ENCODE measurements at regions of chr18 and their contacts with region 1.

Region 1: GRCh38 chr18:63823518-63824219 is 48.5 kb downstream of the SERPINB7 start:
- DNase-seq: peak; percentile 19 to 38
- H3K4me3 ChIP-seq: no peak overlapping the region
- H3K27ac ChIP-seq: no peak overlapping the region
- H3K4me1 ChIP-seq: no peaks in the 10 kb centered on the region
- H3K27me3 ChIP-seq: peaks cover 0 to 3% (median 0%) of the 10 kb centered on the region in 3 donors
- CTCF ChIP-seq: peak in 1 of 7 experiments; percentile 25
- EP300 ChIP-seq: no peak
- POLR2A ChIP-seq: no peak

Region 2: GRCh38 chr18:62586151-62586774 is 1237.4 kb before region 1 on chr18:
- intact Hi-C with region 1: no loop called
- DNase-seq: peak; percentile 60 to 91
- H3K4me3 ChIP-seq: peak overlapping the region in 1 of 4 donors; percentile 13
- H3K27ac ChIP-seq: no peak overlapping the region
- H3K4me1 ChIP-seq: peaks cover 11 to 25% (median 18%) of the 10 kb centered on the region in 4 donors
- H3K27me3 ChIP-seq: no peaks in the 10 kb centered on the region
- CTCF ChIP-seq: peak in 5 of 7 experiments; percentile 59 to 78 (median 70)
- EP300 ChIP-seq: no peak
- POLR2A ChIP-seq: no peak

Region 3: DNA sequence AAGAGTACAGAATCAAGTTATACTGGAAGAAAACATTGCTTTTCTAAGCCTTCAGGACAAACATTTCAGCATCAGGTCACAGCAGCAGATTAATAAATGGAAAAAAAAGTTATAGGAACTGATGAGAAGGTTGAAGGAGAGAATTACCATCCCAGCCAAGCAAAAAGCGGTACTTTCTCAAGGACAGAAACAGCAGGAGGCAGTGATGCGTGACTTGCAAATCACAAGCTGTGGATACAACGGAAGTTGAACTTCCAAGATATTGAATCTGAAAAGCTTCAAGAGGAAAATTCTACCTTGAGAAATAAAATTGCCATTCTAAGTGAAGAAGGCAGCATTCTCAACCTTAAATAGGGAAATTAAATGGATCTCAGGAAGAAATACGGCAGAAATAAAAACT is 300.0 kb before region 1 on chr18:
- intact Hi-C with region 1: loop called (anchors 10 kb)
- DNase-seq: no peak
- H3K4me3 ChIP-seq: no peak overlapping the region
- H3K27ac ChIP-seq: no peak overlapping the region
- H3K4me1 ChIP-seq: peaks cover 0 to under 1% (median 0%) of the 10 kb centered on the region in 4 donors
- H3K27me3 ChIP-seq: peaks cover 0 to 6% (median 0%) of the 10 kb centered on the region in 3 donors
- CTCF ChIP-seq: no peak
- EP300 ChIP-seq: no peak
- POLR2A ChIP-seq: no peak

Region 4: DNA sequence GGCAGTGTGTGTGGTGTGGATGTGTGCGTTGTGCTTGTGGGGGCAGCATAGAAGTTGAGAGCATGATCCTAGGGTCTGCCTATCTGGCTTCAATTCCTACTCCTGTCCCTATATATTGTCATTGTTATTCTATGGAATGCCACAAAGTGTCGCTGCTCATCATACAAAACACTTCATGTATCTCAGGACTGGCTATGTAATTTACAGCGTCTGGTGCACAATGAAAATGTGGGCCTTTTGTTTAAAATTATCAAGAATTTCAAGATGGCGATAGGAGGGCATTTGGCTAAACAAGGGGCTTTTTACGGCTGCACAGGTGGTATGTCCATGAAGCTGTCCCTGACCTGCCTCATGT is 67.3 kb after region 1 on chr18:
- intact Hi-C with region 1: no loop called
- DNase-seq: peak in 1 of 2 donors; percentile 29
- H3K4me3 ChIP-seq: no peak overlapping the region
- H3K27ac ChIP-seq: no peak overlapping the region
- H3K4me1 ChIP-seq: no peaks in the 10 kb centered on the region
- H3K27me3 ChIP-seq: no peaks in the 10 kb centered on the region
- CTCF ChIP-seq: no peak
- EP300 ChIP-seq: no peak
- POLR2A ChIP-seq: no peak

Region 5: GRCh38 chr18:64009305-64009704 is 185.6 kb after region 1 on chr18:
- intact Hi-C with region 1: no loop called
- DNase-seq: no peak
- H3K4me3 ChIP-seq: no peak overlapping the region
- H3K27ac ChIP-seq: no peak overlapping the region
- H3K4me1 ChIP-seq: no peaks in the 10 kb centered on the region
- H3K27me3 ChIP-seq: no peaks in the 10 kb centered on the region
- CTCF ChIP-seq: no peak
- EP300 ChIP-seq: no peak
- POLR2A ChIP-seq: no peak